ENCODE measurements at regions of chr11 and their contacts with region 1.

Region 1: DNA sequence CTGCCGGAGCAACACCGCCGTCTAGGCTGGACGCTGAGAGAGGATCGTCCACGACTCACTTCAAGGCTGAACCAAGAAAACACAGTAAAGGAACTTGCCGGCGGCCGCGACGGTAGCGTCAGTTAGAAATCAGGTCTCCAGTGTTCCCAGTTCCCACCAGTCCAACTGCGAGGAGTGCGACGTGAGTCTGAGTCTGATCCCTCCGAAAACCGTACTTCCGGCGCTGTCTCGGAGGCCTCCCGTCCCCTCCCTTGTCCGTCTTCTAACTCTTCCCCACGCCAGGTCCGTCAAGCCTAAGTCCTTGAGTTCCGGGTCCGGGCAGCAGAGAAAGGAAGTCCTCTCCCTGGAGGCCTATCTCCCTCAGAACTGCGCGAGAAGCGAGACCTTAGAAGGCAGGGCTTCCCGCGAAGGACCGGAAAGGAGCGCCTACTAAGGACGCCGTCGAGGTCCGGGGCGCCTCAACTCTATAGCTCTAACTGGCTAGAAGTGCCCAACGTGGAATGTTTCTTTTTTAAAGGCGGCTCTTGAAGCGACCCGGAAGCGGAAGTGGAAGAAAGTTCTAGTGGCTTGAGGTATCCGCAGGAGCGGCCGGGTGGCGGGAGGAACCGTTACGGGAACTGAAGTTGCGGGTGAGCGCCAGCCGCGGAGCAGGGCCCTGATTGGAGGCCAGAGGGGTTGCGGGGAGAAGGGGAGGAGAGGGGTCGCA is at the starts of genes BANF1 and EIF1AD:
- DNase-seq: peak; percentile 94 to 97
- H3K4me3 ChIP-seq: peak within 1 kb of the TSS; percentile 90
- H3K27ac ChIP-seq: peak within 1 kb of the TSS; percentile 78
- H3K4me1 ChIP-seq: peaks cover 14% of the 10 kb centered on the region
- H3K27me3 ChIP-seq: no peaks in the 10 kb centered on the region
- CTCF ChIP-seq: no peak
- total RNA-seq, gene BANF1: 386 and 513 TPM in 2 replicates
- total RNA-seq, gene EIF1AD: 42.9 and 55.2 TPM in 2 replicates

Region 2: DNA sequence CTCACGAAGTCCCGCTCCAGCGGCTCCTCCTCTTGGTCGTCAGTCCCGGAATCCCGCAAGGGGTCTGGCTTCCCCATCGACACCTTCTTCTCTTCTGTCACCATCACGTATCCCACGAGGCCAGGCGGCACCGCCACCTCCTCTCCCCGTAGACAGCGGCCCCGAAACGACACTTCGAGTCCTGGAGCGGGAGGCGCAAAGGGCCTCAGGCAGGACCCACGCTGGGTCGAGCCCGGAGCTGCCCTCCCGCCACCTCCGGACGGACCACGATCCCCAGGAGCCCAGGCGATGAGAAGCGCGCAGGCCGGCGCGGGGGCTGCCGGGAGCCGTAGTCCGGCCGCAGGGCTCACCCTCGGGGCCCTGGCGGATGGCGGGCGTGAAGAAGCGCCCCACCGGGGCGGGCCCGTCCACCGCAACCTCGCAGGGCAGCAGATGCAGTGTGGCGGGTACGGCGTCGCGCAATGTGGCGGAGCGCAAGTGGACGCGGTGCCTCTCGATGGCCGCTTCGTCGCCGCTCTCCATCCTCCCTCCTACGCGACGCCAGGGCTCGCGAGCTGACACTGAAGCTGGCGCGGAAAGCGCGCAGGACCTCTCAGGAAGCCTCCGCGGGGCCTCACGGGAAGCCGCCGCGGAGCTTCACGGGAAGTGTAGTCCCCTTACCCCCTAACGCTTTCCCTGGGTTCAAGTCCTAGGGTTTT is 281.7 kb before region 1 on chr11 and contains the start of gene RNASEH2C:
- CTCF ChIA-PET with region 1: interaction called, 12 read pairs
- POLR2A ChIA-PET with region 1: no interaction called
- intact Hi-C with region 1: no loop called
- DNase-seq: peak; percentile 75 to 80
- H3K4me3 ChIP-seq: peak within 1 kb of the TSS; percentile 90
- H3K27ac ChIP-seq: no peak within 1 kb of the TSS
- H3K4me1 ChIP-seq: peaks cover 9% of the 10 kb centered on the region
- H3K27me3 ChIP-seq: no peaks in the 10 kb centered on the region
- CTCF ChIP-seq: no peak
- total RNA-seq, gene RNASEH2C: 31.8 and 42.4 TPM in 2 replicates

Region 3: GRCh38 chr11:65791691-65792213 is 210.3 kb before region 1 on chr11:
- CTCF ChIA-PET with region 1: no interaction called
- POLR2A ChIA-PET with region 1: no interaction called
- intact Hi-C with region 1: no loop called
- DNase-seq: peak; percentile 86 to 91
- H3K4me3 ChIP-seq: peak overlapping the region; percentile 33; the same call in 1 of the 2 replicates
- H3K27ac ChIP-seq: peak overlapping the region; percentile 89
- H3K4me1 ChIP-seq: peaks cover 65% of the 10 kb centered on the region
- H3K27me3 ChIP-seq: no peaks in the 10 kb centered on the region
- CTCF ChIP-seq: no peak; the same call in 1 of the 2 replicates

Region 4: DNA sequence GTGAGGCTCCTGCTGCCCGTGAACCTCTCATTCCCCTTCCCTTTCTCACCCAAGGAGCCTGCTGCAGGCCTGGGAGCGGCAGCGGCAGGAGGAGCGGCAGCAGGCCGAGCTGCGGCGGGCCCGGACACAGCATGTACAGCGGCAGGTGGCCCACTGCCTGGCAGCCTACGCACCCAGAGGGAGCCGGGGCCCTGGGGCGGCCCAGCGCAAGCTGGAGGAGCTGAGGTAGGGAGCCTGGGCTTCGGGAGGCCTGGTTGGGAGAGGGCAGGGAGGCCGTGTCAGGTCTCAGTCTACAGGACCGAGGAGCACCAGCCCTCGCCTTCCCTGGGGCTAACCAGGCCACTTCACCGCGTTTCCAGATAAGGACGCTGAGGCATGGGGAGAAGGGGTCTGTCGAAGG is 48.6 kb before region 1 on chr11:
- CTCF ChIA-PET with region 1: no interaction called
- POLR2A ChIA-PET with region 1: no interaction called
- intact Hi-C with region 1: no loop called
- DNase-seq: no peak
- H3K4me3 ChIP-seq: no peak overlapping the region
- H3K27ac ChIP-seq: no peak overlapping the region
- H3K4me1 ChIP-seq: no peaks in the 10 kb centered on the region
- H3K27me3 ChIP-seq: no peaks in the 10 kb centered on the region
- CTCF ChIP-seq: no peak

Region 5: GRCh38 chr11:65973439-65974110 is 28.5 kb before region 1 on chr11:
- CTCF ChIA-PET with region 1: no interaction called
- POLR2A ChIA-PET with region 1: no interaction called
- intact Hi-C with region 1: no loop called
- DNase-seq: no peak
- H3K4me3 ChIP-seq: no peak overlapping the region
- H3K27ac ChIP-seq: no peak overlapping the region
- H3K4me1 ChIP-seq: no peaks in the 10 kb centered on the region
- H3K27me3 ChIP-seq: no peaks in the 10 kb centered on the region
- CTCF ChIP-seq: no peak

Region 6: DNA sequence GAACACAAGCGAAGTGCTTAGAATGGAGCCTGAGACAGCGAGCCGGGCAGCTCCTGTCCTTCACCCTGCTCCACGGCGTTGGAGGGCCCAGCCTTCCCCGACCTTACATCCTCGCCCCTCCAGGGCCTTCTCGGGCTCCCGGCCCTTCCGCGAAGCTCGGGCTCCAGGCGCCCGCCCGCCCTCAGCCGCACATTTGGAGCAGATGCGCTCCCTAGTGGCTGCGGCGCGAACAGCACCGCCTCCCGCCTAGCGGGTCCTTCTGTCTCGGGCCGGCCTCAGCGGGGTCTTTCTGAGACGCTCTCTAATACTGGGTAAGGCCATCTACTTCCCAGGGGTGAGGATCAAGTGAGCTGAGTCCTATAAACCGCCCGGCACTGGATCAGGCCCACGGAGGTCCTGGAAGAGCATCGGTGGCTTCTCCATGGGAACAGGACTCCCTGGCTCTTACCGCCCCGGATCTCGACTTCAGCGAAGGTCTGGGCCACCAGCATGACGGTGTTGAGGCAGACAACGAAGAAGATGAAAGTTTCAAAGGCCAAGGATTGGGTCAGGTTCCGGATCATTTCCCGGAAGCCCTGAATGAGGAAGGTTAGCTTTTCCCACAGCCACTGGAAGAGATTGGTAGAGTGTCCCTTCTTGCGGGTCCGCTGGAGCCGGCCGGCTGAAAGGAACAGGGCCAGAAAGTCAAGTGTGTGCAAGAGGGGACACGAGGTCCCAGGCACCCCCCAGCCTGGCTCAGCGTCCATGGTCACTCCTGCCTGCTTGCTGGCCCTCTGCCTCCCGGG is 20.5 kb after region 1 on chr11:
- CTCF ChIA-PET with region 1: interaction called, 6 read pairs
- POLR2A ChIA-PET with region 1: interaction called, 3 read pairs
- intact Hi-C with region 1: loop called (anchors 1 kb)
- DNase-seq: peak; percentile 49 to 83
- H3K4me3 ChIP-seq: peak overlapping the region; percentile 21; the same call in 1 of the 2 replicates
- H3K27ac ChIP-seq: no peak overlapping the region
- H3K4me1 ChIP-seq: peaks cover 20% of the 10 kb centered on the region
- H3K27me3 ChIP-seq: no peaks in the 10 kb centered on the region
- CTCF ChIP-seq: peak; percentile 99

Region 7: GRCh38 chr11:66051766-66052663 is 49.9 kb after region 1 on chr11 and contains the start of gene SF3B2:
- CTCF ChIA-PET with region 1: no interaction called
- POLR2A ChIA-PET with region 1: no interaction called
- intact Hi-C with region 1: loop called (anchors 2 kb)
- DNase-seq: peak; percentile 98 to 99
- H3K4me3 ChIP-seq: peak within 1 kb of the TSS; percentile 99
- H3K27ac ChIP-seq: peak within 1 kb of the TSS; percentile 75
- H3K4me1 ChIP-seq: peaks cover 20% of the 10 kb centered on the region
- H3K27me3 ChIP-seq: no peaks in the 10 kb centered on the region
- CTCF ChIP-seq: no peak
- total RNA-seq, gene SF3B2: 221 and 224 TPM in 2 replicates

Measured in PC-9 (cell line).